ENCODE measurements at regions of chr16 and their contacts with region 1.

Region 1: DNA sequence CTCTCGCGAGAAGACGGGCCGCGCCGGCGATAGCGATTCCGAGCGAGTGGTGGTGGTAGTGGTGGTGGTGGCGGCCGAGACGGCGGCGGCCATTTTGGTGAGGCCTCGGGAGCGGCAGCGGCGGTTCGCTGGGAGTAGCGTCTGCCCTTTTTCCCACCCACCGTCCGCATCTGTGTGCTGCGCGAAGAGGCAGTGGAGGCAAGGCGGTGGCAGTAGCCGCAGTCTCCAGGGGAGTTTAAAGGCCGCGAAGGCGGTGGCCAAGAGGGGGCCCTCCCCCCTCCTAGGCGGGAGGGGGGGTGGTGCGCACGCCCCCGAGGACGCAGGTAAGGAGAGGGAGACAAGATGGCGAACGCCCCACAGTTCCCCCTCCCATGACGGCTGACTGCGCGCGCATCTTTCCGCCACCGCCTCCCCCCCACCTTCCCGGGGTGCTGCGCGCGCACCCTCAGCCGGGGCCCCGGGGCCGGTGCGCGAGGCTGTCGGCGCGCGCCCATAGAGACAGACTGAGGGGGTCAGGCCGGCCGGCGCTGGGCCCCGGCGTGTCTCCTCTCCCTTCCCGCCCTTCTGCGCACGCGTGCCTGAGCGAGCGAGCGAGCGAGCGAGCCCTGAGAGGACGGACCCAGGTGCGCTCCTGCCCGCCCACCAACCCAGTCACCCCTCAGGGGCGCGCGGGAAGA is 694 bp upstream of the SRCAP start:
- DNase-seq: peak; percentile 98 to 99
- H3K4me3 ChIP-seq: peak overlapping the region; percentile 100
- H3K27ac ChIP-seq: peak overlapping the region; percentile 99
- H3K4me1 ChIP-seq: peaks cover 17 to 20% of the 10 kb centered on the region in 2 donors
- H3K27me3 ChIP-seq: no peaks in the 10 kb centered on the region
- CTCF ChIP-seq: no peak
- POLR2A ChIP-seq: peak in 1 of 2 donors; percentile 88

Region 2: DNA sequence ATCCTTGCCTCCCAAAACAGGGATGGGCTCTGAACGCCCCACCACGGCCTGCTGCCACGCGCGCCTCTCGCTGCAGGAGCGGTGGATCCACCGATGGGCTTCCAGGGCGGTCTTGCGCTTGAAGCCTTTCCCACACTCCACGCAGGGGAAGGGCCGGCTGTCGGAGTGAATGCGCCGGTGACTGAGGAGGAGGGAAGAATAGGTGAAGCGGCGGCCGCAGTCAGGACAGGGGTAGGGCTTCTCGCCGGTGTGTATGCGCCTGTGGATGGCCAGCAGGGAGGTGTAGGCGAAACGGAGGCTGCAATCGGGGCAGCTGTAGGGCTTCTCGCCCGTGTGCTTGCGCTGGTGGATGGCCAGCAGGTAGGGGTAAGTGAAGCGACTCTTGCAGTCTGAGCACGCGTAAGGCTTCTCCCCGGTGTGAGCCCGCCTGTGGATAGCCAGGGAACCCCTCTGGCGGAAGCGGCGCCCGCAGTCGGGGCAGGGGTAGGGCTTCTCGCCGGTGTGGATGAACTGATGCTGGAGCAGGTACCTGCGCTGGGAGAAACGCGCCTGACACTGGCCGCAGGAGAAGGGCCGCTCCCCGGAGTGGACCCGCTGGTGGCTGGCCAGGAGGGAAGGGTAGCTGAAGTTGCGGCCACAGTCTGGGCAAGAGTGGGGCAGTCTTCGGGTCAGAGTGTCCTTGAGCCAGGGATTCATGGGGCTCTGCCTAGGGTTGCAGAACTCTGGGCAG is 115.5 kb before region 1 on chr16:
- intact Hi-C with region 1: loop called (anchors 5 kb)
- DNase-seq: no peak
- H3K4me3 ChIP-seq: no peak overlapping the region
- H3K27ac ChIP-seq: no peak overlapping the region
- H3K4me1 ChIP-seq: peaks cover 10 to 12% of the 10 kb centered on the region in 2 donors
- H3K27me3 ChIP-seq: no peaks in the 10 kb centered on the region
- CTCF ChIP-seq: no peak
- POLR2A ChIP-seq: no peak

Region 3: DNA sequence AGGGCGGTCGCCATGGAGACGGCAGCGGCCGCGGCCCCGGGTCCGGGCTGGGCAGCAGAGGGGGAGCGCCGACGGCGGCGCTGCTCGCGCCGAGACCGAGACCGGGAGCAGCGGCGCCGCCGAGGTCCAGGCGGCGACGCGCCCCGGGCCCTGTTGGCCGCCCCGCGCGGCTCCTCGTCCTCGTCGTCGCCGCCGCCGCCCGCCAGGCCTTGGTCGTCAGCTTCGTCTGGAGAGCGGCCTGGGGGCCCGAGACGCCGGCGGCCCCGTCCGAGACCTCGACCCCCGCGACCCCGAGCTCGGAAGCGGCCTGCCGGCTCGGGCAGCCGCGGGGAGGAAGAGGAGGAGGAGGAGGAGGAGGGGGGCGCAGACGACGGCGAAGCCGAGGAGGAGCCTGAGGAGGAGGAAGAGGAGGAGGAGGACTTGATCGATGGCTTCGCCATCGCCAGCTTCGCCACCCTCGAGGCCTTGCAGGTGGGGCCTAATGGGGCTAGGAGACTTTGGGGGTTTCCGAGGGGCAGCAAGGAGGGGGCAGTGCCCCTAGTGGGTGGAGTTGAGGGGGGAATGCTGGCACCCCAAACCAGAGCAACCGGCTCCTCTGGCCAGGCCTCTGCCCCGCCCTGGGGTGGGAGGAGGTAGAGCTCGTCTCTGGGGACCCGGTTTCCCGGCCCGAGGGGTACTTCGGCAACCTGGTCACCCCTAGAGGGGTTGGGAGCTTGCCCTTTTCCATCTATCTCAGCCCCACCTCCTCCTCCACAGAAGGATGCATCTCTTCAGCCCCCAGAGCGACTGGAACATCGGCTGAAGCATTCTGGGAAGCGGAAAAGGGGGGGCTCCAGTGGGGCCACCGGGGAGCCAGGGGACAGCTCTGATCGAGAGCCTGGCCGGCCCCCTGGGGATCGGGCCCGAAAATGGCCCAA is 38.5 kb before region 1 on chr16:
- intact Hi-C with region 1: loop called (anchors 5 kb)
- DNase-seq: peak; percentile 16 to 23
- H3K4me3 ChIP-seq: peak overlapping the region; percentile 76 to 96 (median 95)
- H3K27ac ChIP-seq: peak overlapping the region; percentile 78 to 97 (median 95)
- H3K4me1 ChIP-seq: peaks cover 26 to 35% of the 10 kb centered on the region in 2 donors
- H3K27me3 ChIP-seq: no peaks in the 10 kb centered on the region
- CTCF ChIP-seq: no peak
- POLR2A ChIP-seq: no peak

Region 4: DNA sequence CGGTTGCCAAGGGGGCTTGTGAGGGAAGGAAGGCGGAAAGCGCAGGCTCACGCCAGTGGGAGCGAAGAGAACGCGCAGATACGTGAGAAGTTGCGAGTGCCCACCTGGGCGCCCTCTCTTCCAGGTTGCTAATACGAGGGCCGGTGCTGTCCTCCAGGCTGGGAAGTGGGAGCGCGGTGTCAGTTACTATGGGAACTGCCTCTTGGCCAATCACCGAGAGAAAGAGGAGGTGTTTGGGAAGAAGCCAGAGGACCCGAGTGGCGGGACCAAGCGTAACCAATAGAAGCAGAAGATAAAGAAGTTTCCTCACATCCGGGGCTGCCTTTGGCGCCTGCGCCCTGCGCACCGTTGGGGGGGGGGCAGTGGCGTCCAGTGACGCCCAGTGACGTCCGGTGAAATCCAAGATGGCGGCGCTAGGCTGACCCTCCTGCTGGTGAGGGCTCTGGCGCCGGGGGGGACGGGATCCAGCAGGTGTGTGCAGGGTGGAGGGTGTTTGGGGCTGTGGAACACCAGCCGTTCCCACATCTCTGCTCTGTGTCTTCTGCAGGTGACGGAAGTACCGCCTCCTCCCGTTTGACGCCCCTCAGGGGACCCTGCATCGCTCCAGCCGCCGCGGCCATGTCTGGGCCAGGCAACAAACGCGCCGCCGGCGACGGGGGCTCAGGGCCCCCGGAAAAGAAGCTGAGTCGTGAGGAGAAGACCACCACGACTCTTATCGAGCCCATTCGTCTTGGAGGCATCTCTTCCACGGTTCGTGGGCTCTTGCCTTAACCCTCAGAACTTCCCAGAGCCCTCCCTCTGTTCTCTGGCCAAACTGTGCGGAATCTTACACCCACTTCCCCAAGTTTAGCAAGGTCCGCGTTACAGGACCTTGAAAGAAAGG is 63.9 kb after region 1 on chr16 and contains the starts of genes CFAP119 and RNF40:
- intact Hi-C with region 1: no loop called
- DNase-seq: peak; percentile 96 to 98
- H3K4me3 ChIP-seq: peak within 1 kb of the TSS; percentile 95 to 99 (median 98)
- H3K27ac ChIP-seq: peak within 1 kb of the TSS; percentile 74 to 94 (median 82)
- H3K4me1 ChIP-seq: peaks cover 22 to 24% of the 10 kb centered on the region in 2 donors
- H3K27me3 ChIP-seq: no peaks in the 10 kb centered on the region
- CTCF ChIP-seq: no peak
- POLR2A ChIP-seq: peak in 1 of 2 donors; percentile 83
- total RNA-seq, gene CFAP119: 9.6 to 24.7 (median 15.5) TPM
- total RNA-seq, gene RNF40: 105 to 147 (median 113) TPM